ENCODE measurements at regions of chr2 and their contacts with region 1.

Region 1: GRCh38 chr2:209423562-209424198 is at the start of gene MAP2:
- DNase-seq: peak; percentile 61
- ATAC-seq: peak; percentile 99
- H3K4me3 ChIP-seq: peak within 1 kb of the TSS; percentile 29 to 63 (median 41); a peak in 5 of 6 replicates
- H3K27ac ChIP-seq: no peak within 1 kb of the TSS
- H3K4me1 ChIP-seq: peaks cover 11% of the 10 kb centered on the region
- H3K27me3 ChIP-seq: peaks cover 0 to 5% of the 10 kb centered on the region in 2 experiments; a peak in 2 of 5 replicates
- CTCF ChIP-seq: peak; percentile 81
- EP300 ChIP-seq: peak in 1 of 2 experiments; percentile 22; a peak in 1 of 4 replicates
- POLR2A ChIP-seq: no peak
- RAD21 ChIP-seq: peak; percentile 94
- total RNA-seq, gene MAP2: not detected in 2 replicates

Region 2: GRCh38 chr2:209368900-209369299 is 54.8 kb before region 1 on chr2:
- CTCF ChIA-PET with region 1: no interaction called
- POLR2A ChIA-PET with region 1: no interaction called
- in situ Hi-C with region 1: no loop called
- intact Hi-C with region 1: no loop called
- DNase-seq: peak; percentile 54
- ATAC-seq: peak; percentile 43; the same call in 1 of the 3 replicates
- H3K4me3 ChIP-seq: no peak overlapping the region
- H3K27ac ChIP-seq: no peak overlapping the region
- H3K4me1 ChIP-seq: no peaks in the 10 kb centered on the region
- H3K27me3 ChIP-seq: no peaks in the 10 kb centered on the region
- CTCF ChIP-seq: no peak
- EP300 ChIP-seq: no peak
- POLR2A ChIP-seq: no peak
- RAD21 ChIP-seq: no peak

Region 3: GRCh38 chr2:209472112-209472832 is 48.6 kb after region 1 on chr2:
- CTCF ChIA-PET with region 1: no interaction called
- POLR2A ChIA-PET with region 1: no interaction called
- in situ Hi-C with region 1: no loop called
- intact Hi-C with region 1: no loop called
- DNase-seq: no peak
- ATAC-seq: no peak
- H3K4me3 ChIP-seq: no peak overlapping the region
- H3K27ac ChIP-seq: no peak overlapping the region
- H3K4me1 ChIP-seq: no peaks in the 10 kb centered on the region
- H3K27me3 ChIP-seq: no peaks in the 10 kb centered on the region
- CTCF ChIP-seq: no peak
- EP300 ChIP-seq: no peak
- POLR2A ChIP-seq: no peak
- RAD21 ChIP-seq: no peak

Region 4: DNA sequence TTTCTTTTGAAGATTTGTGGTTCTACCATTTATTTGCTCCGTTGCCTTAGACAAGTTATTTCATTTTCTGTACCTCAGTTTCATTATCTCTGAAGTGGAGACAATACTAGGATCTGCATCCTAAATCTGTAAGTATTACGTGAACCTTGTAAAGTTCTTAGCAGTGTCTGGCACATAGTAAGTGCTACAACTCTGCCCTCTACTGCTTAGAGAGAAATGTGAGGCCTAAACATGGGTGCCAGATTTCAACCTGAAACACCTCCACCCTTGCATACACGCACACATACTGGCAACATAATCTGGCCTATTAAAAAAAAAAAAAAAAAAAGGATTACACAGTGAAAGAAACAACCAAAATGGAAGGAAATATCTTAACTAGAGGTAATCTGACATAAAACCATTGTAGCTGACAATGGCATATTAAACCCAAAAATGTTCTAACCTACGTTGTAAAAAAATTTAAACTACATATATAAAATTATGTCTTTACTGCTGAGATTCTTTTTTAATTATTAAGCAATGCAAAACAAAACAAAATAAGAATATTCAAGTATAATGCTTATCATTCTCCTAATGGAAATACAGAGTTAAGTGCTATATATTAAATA is 132.8 kb after region 1 on chr2:
- CTCF ChIA-PET with region 1: no interaction called
- POLR2A ChIA-PET with region 1: no interaction called
- in situ Hi-C with region 1: no loop called
- intact Hi-C with region 1: loop called (anchors 1 kb)
- DNase-seq: peak; percentile 32
- ATAC-seq: peak; percentile 84
- H3K4me3 ChIP-seq: no peak overlapping the region
- H3K27ac ChIP-seq: no peak overlapping the region
- H3K4me1 ChIP-seq: no peaks in the 10 kb centered on the region
- H3K27me3 ChIP-seq: no peaks in the 10 kb centered on the region
- CTCF ChIP-seq: peak; percentile 45
- EP300 ChIP-seq: no peak
- POLR2A ChIP-seq: no peak
- RAD21 ChIP-seq: no peak

Region 5: GRCh38 chr2:209577376-209578357 is 154.0 kb after region 1 on chr2:
- CTCF ChIA-PET with region 1: interaction called, 3 read pairs
- POLR2A ChIA-PET with region 1: no interaction called
- in situ Hi-C with region 1: no loop called
- intact Hi-C with region 1: loop called (anchors 1 kb)
- DNase-seq: peak; percentile 10
- ATAC-seq: no peak
- H3K4me3 ChIP-seq: no peak overlapping the region
- H3K27ac ChIP-seq: no peak overlapping the region
- H3K4me1 ChIP-seq: no peaks in the 10 kb centered on the region
- H3K27me3 ChIP-seq: no peaks in the 10 kb centered on the region
- CTCF ChIP-seq: peak; percentile 24; the same call in 1 of the 2 replicates
- EP300 ChIP-seq: no peak
- POLR2A ChIP-seq: no peak
- RAD21 ChIP-seq: no peak

Region 6: DNA sequence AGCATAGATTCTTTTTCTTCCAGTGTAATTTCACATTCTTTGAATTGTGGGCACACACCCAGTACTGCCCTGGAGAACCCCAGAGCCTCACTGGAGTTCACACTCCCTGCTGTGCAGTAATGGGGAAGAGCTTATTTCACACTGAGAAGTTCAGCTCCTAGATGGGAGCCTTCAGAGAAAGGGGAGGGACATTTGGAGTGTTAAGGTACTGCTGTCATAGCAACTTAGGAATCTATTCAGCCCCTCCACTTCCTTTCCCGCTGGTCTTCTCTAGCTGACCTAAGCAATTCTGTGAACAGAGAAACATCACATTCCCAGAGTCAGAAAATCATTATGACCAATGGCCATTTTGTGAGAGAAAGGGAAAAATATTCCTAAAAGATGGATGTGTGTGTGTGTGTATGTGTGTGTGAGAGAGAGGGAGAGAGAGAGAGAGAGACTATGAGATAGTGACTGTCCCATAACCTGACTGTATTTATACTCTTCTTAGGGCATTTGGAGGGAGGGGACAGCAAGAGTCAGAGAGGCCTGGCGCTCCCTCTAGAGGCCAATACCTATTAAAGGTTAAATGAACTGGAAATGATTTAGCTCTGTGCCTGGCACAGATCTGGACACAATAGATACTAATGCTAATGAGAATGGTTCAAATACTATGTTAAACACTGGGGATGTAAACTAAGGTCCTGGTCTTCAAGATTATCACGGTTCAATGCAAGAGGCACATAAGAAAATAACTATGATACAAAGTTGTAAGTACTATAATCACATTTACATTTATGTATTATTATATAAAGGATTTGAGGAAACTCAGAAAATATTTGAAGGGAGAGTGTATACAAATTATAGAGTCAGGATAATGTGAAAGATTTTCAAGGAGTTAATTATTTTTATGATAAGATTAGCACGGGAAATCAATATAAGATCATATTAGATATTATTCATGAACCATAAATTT is 537.3 kb after region 1 on chr2:
- CTCF ChIA-PET with region 1: no interaction called
- POLR2A ChIA-PET with region 1: no interaction called
- in situ Hi-C with region 1: no loop called
- intact Hi-C with region 1: loop called (anchors 2 kb)
- DNase-seq: peak; percentile 67
- ATAC-seq: peak; percentile 98
- H3K4me3 ChIP-seq: no peak overlapping the region
- H3K27ac ChIP-seq: no peak overlapping the region
- H3K4me1 ChIP-seq: no peaks in the 10 kb centered on the region
- H3K27me3 ChIP-seq: 0 out of 5 replicates have a peak, but pooled peaks cover 0 to 12% of the 10 kb centered on the region in 2 experiments
- CTCF ChIP-seq: peak; percentile 85
- EP300 ChIP-seq: no peak
- POLR2A ChIP-seq: no peak
- RAD21 ChIP-seq: peak; percentile 45; the same call in 1 of the 2 replicates

Measured in HepG2 (cell line).